Dendritic cell treated with granulocyte-macrophage colony-stimulating factor and Interleukin-4, amounts not matched to agents 40 ng/mL and 50 ng/mL, for 4 days (primary cell): ENCODE measurements at regions of chr3 and their contacts with region 1.

Region 1: DNA sequence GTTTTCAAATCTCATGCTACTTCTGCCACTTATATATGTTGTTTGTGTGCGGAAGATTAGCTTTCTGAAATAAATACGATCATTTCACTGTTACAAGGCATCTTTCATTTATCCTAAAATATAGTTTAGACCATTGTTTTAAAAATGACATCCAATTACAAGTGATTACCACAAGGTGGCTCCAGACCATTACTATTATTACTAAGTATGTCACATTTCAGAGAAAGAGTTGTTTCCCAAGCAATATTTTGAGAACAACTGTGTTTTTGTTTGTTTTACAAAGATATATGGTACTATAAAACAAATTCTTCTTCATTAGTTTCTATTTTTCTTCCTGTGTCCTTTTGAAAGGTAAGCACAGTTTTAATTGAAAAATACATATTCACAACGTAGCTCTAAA is 136.0 kb upstream of the RAP2B start:
- H3K4me3 Mint-ChIP-seq: no peak overlapping the region
- H3K27ac Mint-ChIP-seq: no peak overlapping the region
- H3K4me1 Mint-ChIP-seq: peaks cover 32% of the 10 kb centered on the region
- H3K27me3 Mint-ChIP-seq: no peaks in the 10 kb centered on the region

Region 2: GRCh38 chr3:153291056-153291685 is 265.1 kb after region 1 on chr3:
- intact Hi-C with region 1: loop called (anchors 5 kb)
- H3K4me3 Mint-ChIP-seq: no peak overlapping the region
- H3K27ac Mint-ChIP-seq: peak overlapping the region; percentile 57
- H3K4me1 Mint-ChIP-seq: peaks cover 39% of the 10 kb centered on the region
- H3K27me3 Mint-ChIP-seq: no peaks in the 10 kb centered on the region

Region 3: DNA sequence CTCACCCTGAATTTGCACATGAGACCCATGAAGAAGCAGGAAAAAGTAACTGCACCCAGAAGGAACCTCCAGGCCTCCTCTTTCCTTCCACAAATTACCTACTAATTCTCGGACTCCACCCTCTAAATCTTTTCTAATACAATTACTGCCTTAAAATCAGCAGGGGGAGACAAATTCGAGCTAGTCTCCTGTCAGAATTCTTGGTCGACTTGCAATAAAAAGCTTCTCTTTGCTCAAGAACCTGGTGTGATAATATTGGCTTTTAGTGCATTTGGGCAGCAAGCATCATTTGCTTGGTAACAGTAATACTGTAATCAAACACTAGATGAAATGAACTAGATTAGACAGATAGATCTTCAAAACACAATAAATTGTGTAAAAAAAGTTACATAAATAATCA is 417.9 kb after region 1 on chr3:
- intact Hi-C with region 1: no loop called
- H3K4me3 Mint-ChIP-seq: no peak overlapping the region
- H3K27ac Mint-ChIP-seq: no peak overlapping the region
- H3K4me1 Mint-ChIP-seq: peaks cover 2% of the 10 kb centered on the region
- H3K27me3 Mint-ChIP-seq: no peaks in the 10 kb centered on the region

Region 4: DNA sequence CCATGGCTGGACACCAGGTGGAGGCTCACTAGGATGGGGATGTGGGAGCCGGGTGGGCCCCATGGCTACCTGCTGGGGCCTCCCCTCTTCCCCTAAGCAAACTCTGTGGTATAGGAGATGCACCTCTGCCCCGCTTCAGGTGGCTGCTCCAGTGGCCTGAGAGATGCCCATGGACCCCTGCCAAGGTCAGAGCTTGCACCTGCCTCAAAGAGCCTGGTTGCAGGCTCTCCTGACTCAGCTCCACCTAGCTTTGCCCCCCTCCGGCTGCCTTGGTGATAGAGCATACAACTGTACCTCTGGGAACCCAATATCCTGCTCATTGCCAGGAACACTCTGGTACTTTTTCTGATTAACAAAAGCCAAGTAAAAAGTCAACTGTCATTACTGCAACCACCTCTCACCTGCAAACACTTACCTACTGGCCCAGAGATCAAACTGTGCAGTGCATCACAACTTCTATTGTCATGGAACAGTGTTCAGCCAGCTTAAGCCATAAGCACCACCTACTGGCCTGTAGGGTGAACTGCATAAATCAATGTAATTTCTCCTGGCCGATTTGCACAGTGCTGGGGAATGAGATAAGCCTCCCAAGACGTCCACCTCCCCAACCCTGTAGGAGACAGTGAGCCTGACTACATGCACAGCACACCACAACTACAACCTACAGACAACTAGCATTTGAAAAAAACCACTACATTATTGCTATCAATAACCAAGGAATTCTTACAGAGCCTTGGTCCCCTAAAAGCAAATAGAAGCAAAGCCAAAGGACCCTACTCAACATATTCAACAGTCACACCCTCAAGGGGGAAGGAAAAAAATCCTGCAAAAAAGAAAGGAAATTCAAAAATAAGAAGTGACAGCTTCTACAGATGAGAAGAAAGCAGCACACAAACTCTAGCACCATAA is 742.8 kb after region 1 on chr3:
- intact Hi-C with region 1: loop called (anchors 1 kb)
- H3K4me3 Mint-ChIP-seq: no peak overlapping the region
- H3K27ac Mint-ChIP-seq: no peak overlapping the region
- H3K4me1 Mint-ChIP-seq: peaks cover 17% of the 10 kb centered on the region
- H3K27me3 Mint-ChIP-seq: peaks cover 7% of the 10 kb centered on the region

Region 5: DNA sequence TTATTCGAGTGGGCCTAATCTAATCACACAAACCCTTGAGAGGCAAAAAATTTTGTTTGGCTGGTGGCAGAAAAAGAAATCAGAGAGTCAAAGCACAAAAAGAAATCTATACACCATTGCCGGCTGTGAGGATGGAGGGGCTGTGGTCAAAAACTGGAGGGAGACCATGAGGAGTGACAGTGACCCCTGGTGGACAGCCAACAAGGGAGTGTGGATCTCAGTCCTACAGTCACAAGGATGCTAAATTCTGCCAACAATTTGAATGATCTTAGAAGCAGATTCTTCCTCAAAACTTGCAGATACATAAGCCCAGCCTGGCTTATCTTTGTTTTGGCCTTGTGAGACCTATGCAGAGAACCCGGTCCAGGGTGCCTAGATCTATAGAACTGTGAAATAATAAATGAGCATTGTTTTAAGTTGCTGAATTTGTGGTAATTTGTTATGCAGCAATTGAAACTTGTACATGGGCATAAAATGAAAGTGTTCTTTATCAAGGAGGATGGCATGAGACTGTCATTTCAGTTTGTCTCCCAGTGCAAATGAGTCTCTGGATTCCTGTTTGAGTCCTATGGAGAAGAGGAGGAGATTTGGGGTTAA is 992.2 kb after region 1 on chr3:
- intact Hi-C with region 1: loop called (anchors 10 kb)
- H3K4me3 Mint-ChIP-seq: no peak overlapping the region
- H3K27ac Mint-ChIP-seq: no peak overlapping the region
- H3K4me1 Mint-ChIP-seq: no peaks in the 10 kb centered on the region
- H3K27me3 Mint-ChIP-seq: no peaks in the 10 kb centered on the region

Region 6: DNA sequence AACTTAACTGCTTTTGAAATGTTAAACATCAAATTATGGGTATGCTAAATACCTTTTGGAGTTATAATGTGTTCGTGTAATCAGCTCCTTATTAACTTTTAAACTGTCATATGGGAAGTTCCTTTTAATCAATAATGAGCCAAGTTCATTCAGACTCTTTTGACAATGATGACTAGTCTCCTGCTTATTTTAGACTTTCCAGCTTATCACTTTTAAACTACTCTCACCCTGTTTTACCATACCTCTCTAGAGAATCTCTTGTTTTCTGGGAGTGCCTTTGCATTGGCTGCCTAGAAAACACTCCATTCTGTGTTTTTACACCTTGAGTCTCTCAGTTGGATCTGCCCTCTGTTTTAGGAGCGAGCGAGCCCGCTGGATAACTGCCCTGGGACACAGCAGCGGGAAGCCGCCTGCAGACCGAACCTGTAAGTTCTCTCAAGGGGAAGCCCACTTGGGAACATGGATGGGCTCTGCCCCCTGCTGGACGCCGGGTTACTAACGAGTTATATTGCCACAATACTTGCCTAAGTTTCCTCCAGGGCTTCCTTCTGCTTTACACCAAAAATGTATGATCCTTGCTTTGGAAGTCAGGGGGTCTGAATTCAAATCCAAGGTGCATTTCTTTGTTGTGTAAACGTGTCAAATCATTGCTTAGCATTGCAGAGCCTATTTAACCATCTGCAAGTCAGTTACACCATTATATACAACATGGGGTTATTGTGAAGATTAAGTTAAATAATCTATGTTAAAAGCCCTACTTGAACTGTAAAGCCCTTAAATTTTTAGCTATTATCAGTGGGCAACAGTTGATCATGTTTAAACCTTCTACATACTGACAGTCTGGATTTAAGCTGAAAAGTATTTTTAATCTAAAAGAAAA is 1227.0 kb after region 1 on chr3:
- intact Hi-C with region 1: loop called (anchors 5 kb)
- H3K4me3 Mint-ChIP-seq: no peak overlapping the region
- H3K27ac Mint-ChIP-seq: no peak overlapping the region
- H3K4me1 Mint-ChIP-seq: peaks cover 5% of the 10 kb centered on the region
- H3K27me3 Mint-ChIP-seq: no peaks in the 10 kb centered on the region